A549 (cell line): ENCODE measurements at regions of chr12 and their contacts with region 1.

Region 1: DNA sequence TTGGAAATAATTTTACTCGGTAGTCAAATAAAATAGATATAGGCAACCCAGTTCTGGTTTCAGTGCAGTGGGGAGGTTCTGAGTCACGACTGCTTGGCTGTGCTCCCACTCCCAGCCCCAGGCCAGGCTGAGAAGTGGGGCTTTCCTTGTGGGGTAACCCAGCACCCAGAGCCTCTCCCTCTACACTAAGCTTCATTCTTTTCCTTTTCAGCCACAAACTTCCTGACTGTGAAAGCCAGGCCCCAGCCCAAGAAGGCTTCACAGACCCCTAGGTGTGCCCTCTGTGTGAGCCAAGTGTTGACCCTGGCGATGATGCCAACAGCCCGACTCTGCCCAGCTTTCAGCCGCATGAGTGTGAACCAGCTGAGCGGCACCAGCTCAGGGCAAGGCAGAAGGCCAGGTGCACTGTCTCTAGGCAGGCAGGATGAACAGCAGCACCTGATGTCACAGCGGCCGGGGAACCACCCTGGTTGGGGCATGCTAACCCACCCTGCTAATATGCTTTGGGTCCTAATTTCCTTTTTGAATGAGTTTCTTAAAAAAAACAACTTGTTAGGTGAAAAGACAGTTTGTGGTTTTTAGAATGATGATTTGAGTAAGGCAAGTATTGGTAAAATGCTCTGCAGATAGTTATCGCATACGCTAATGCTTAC is 42.2 kb upstream of the ATP23 start:
- DNase-seq: no peak
- ATAC-seq: peak in 1 of 2 experiments; percentile 10; a peak in 2 of 6 replicates
- H3K4me3 ChIP-seq: no peak overlapping the region
- H3K27ac ChIP-seq: peak overlapping the region; percentile 28 to 61; a peak in 5 of 6 replicates
- H3K4me1 ChIP-seq: peaks cover 36% of the 10 kb centered on the region
- CTCF ChIP-seq: no peak
- EP300 ChIP-seq: no peak
- POLR2A ChIP-seq: no peak
- RAD21 ChIP-seq: no peak

Region 2: GRCh38 chr12:57822392-57823130 is 76.6 kb before region 1 on chr12:
- CTCF ChIA-PET with region 1: interaction called, 142 read pairs
- POLR2A ChIA-PET with region 1: no interaction called
- DNase-seq: no peak
- ATAC-seq: no peak
- H3K4me3 ChIP-seq: no peak overlapping the region
- H3K27ac ChIP-seq: no peak overlapping the region
- H3K4me1 ChIP-seq: no peaks in the 10 kb centered on the region
- CTCF ChIP-seq: no peak
- EP300 ChIP-seq: no peak
- POLR2A ChIP-seq: no peak
- RAD21 ChIP-seq: no peak

Region 3: GRCh38 chr12:57836442-57837375 is 62.4 kb before region 1 on chr12:
- CTCF ChIA-PET with region 1: interaction called, 218 read pairs
- POLR2A ChIA-PET with region 1: interaction called, 3 read pairs
- DNase-seq: no peak
- ATAC-seq: peak in 1 of 2 experiments; percentile 12; a peak in 2 of 6 replicates
- H3K4me3 ChIP-seq: no peak overlapping the region
- H3K27ac ChIP-seq: peak overlapping the region in 1 of 2 experiments; percentile 2; a peak in 2 of 6 replicates
- H3K4me1 ChIP-seq: peaks cover 38% of the 10 kb centered on the region
- CTCF ChIP-seq: no peak
- EP300 ChIP-seq: no peak
- POLR2A ChIP-seq: no peak
- RAD21 ChIP-seq: no peak

Region 4: DNA sequence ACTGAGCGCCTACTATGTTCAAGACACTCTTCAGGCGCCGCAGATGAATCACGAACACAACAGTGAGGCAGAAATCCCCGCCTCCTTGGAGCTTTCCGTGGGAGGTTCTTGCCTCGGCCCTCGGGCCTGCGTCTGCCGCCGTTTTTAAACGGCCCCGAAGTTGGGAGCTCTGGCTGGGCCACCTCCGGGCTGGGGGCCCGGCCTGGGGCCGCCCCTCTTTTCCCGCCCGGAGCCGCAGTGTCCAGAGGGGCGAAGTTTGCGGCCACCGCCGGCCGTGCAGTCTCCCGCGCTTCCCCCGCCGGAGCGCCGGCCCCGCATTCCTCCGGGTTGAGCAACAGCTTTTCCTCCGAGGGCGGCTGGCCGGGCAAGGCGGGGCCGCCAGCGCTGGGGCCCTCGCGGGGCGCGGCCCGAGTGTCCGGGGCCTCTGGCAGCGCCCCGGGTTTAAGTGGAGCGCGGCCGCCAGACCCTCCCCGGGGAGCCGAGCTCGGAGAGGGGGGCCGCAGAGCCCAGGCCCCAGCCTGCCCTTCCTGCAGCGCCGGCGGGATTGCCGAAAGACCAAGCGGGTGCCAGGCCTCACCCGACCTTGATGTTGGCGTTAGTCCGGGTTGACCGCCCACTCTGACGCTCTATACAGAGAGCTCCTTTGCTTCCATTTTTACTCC is 33.9 kb before region 1 on chr12:
- CTCF ChIA-PET with region 1: interaction called, 16 read pairs
- POLR2A ChIA-PET with region 1: interaction called, 62 read pairs
- DNase-seq: peak; percentile 83 to 89
- ATAC-seq: peak; percentile 93 to 94
- H3K4me3 ChIP-seq: peak overlapping the region; percentile 49
- H3K27ac ChIP-seq: peak overlapping the region; percentile 93 to 99
- H3K4me1 ChIP-seq: peaks cover 25% of the 10 kb centered on the region
- CTCF ChIP-seq: no peak
- EP300 ChIP-seq: no peak
- POLR2A ChIP-seq: no peak; the same call in none of the 2 replicates
- RAD21 ChIP-seq: peak; percentile 17 to 42; a peak in 4 of 5 replicates